CD8-positive, alpha-beta T cell (primary cell): ENCODE measurements at regions of chr14 and their contacts with region 1.

Region 1: GRCh38 chr14:92039719-92040430 is at the start of gene TRIP11:
- DNase-seq: peak; percentile 93 to 97 (median 95)
- ATAC-seq: peak; percentile 86
- H3K4me3 ChIP-seq: peak within 1 kb of the TSS; percentile 86 to 93
- H3K4me3 Mint-ChIP-seq: peak within 1 kb of the TSS; percentile 95
- H3K27ac ChIP-seq: peak within 1 kb of the TSS; percentile 94 to 96
- H3K27ac Mint-ChIP-seq: peak within 1 kb of the TSS; percentile 100
- H3K4me1 ChIP-seq: peaks cover 34% of the 10 kb centered on the region
- H3K4me1 Mint-ChIP-seq: peaks cover 51% of the 10 kb centered on the region
- H3K27me3 ChIP-seq: no peaks in the 10 kb centered on the region
- H3K27me3 Mint-ChIP-seq: no peaks in the 10 kb centered on the region
- CTCF ChIP-seq: no peak
- total RNA-seq, gene TRIP11: 25.3 to 26.5 TPM

Region 2: GRCh38 chr14:91510174-91511042 is 529.5 kb before region 1 on chr14 and contains the start of gene PPP4R3A:
- CTCF ChIA-PET with region 1: no interaction called
- POLR2A ChIA-PET with region 1: interaction called, 11 read pairs
- intact Hi-C with region 1: loop called in 1 of 2 experiments (anchors 2 kb)
- DNase-seq: peak; percentile 84 to 99 (median 93)
- ATAC-seq: peak; percentile 86
- H3K4me3 ChIP-seq: peak within 1 kb of the TSS; percentile 48 to 96
- H3K4me3 Mint-ChIP-seq: peak within 1 kb of the TSS; percentile 100
- H3K27ac ChIP-seq: peak within 1 kb of the TSS; percentile 94 to 98
- H3K27ac Mint-ChIP-seq: peak within 1 kb of the TSS; percentile 100
- H3K4me1 ChIP-seq: peaks cover 26% of the 10 kb centered on the region
- H3K4me1 Mint-ChIP-seq: peaks cover 32% of the 10 kb centered on the region
- H3K27me3 ChIP-seq: no peaks in the 10 kb centered on the region
- H3K27me3 Mint-ChIP-seq: no peaks in the 10 kb centered on the region
- CTCF ChIP-seq: no peak
- total RNA-seq, gene PPP4R3A: 279 to 285 TPM

Region 3: GRCh38 chr14:92004062-92004461 is 35.8 kb before region 1 on chr14:
- CTCF ChIA-PET with region 1: interaction called, 5 read pairs
- POLR2A ChIA-PET with region 1: interaction called, 12 read pairs
- intact Hi-C with region 1: loop called in 1 of 2 experiments (anchors 5 kb)
- DNase-seq: no peak
- ATAC-seq: no peak
- H3K4me3 ChIP-seq: no peak overlapping the region
- H3K4me3 Mint-ChIP-seq: no peak overlapping the region
- H3K27ac ChIP-seq: no peak overlapping the region
- H3K27ac Mint-ChIP-seq: peak overlapping the region; percentile 88
- H3K4me1 ChIP-seq: peaks cover 47% of the 10 kb centered on the region
- H3K4me1 Mint-ChIP-seq: peaks cover 49% of the 10 kb centered on the region
- H3K27me3 ChIP-seq: no peaks in the 10 kb centered on the region
- H3K27me3 Mint-ChIP-seq: no peaks in the 10 kb centered on the region
- CTCF ChIP-seq: no peak

Region 4: DNA sequence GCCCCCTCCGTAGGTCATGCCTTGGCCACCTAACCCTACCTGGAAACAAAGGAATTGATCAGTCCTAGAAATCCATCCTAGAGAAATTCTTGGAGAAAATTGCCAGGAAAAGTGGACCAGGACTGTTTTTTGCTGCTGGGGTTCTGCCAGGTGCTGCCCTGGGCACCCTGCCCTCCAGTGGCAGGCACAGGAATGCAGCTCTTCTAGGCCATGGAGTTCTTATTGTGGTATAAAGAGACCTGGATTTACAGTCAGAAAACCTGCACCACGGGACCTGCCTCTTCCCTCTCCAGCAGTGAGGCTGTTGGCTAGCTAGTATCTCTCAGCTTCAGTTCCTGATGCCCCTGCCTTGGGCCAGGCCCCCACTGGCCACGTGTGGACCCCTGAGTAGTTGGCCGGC is 342.8 kb after region 1 on chr14:
- CTCF ChIA-PET with region 1: no interaction called
- POLR2A ChIA-PET with region 1: no interaction called
- intact Hi-C with region 1: no loop called
- DNase-seq: no peak
- ATAC-seq: no peak
- H3K4me3 ChIP-seq: no peak overlapping the region
- H3K4me3 Mint-ChIP-seq: no peak overlapping the region
- H3K27ac ChIP-seq: no peak overlapping the region
- H3K27ac Mint-ChIP-seq: no peak overlapping the region
- H3K4me1 ChIP-seq: no peaks in the 10 kb centered on the region
- H3K4me1 Mint-ChIP-seq: no peaks in the 10 kb centered on the region
- H3K27me3 ChIP-seq: no peaks in the 10 kb centered on the region
- H3K27me3 Mint-ChIP-seq: no peaks in the 10 kb centered on the region
- CTCF ChIP-seq: no peak

Region 5: GRCh38 chr14:92793709-92794546 is 754.1 kb after region 1 on chr14 and contains the start of gene GOLGA5:
- CTCF ChIA-PET with region 1: no interaction called
- POLR2A ChIA-PET with region 1: interaction called, 3 read pairs
- intact Hi-C with region 1: loop called (anchors 2 to 5 kb)
- DNase-seq: peak; percentile 97 to 99 (median 98)
- ATAC-seq: peak; percentile 94
- H3K4me3 ChIP-seq: peak within 1 kb of the TSS; percentile 92 to 99
- H3K4me3 Mint-ChIP-seq: peak within 1 kb of the TSS; percentile 97
- H3K27ac ChIP-seq: peak within 1 kb of the TSS; percentile 88 to 92
- H3K27ac Mint-ChIP-seq: peak within 1 kb of the TSS; percentile 97
- H3K4me1 ChIP-seq: peaks cover 27% of the 10 kb centered on the region
- H3K4me1 Mint-ChIP-seq: peaks cover 38% of the 10 kb centered on the region
- H3K27me3 ChIP-seq: no peaks in the 10 kb centered on the region
- H3K27me3 Mint-ChIP-seq: no peaks in the 10 kb centered on the region
- CTCF ChIP-seq: no peak
- total RNA-seq, gene GOLGA5: 4.5 to 5.9 TPM